ENCODE measurements at regions of chr1 and their contacts with region 1.

Region 1: DNA sequence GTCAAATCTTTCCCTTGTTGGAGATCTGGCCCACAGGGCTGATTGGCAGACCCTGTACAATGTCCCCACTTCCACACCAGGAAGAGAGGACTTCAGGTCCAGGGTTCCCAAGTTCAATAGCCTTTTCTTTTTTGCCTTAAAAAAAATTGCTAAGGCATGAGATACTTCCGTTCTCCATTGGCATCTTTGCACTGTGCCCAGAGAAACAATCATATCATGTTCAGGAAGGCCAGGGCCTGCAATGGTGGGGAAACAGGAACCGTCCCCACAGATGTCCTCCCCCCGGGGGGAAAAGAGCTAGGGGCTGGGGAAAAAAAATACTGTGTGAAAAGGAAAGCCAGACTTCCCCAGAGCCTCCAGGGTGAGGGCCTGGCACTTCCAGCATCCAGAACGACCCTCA is 24.6 kb upstream of the GJA8 start:
- DNase-seq: no peak
- H3K4me3 ChIP-seq: no peak overlapping the region
- H3K27ac ChIP-seq: no peak overlapping the region
- H3K4me1 ChIP-seq: no peaks in the 10 kb centered on the region
- H3K27me3 ChIP-seq: no peaks in the 10 kb centered on the region
- CTCF ChIP-seq: no peak

Region 2: GRCh38 chr1:147821883-147822282 is 56.1 kb before region 1 on chr1:
- CTCF ChIA-PET with region 1: no interaction called
- dilution Hi-C with region 1: loop called (anchors 5 kb)
- in situ Hi-C with region 1: no loop called
- intact Hi-C with region 1: no loop called
- DNase-seq: no peak
- H3K4me3 ChIP-seq: no peak overlapping the region
- H3K27ac ChIP-seq: no peak overlapping the region
- H3K4me1 ChIP-seq: peaks cover 3% of the 10 kb centered on the region
- H3K27me3 ChIP-seq: no peaks in the 10 kb centered on the region
- CTCF ChIP-seq: no peak

Region 3: DNA sequence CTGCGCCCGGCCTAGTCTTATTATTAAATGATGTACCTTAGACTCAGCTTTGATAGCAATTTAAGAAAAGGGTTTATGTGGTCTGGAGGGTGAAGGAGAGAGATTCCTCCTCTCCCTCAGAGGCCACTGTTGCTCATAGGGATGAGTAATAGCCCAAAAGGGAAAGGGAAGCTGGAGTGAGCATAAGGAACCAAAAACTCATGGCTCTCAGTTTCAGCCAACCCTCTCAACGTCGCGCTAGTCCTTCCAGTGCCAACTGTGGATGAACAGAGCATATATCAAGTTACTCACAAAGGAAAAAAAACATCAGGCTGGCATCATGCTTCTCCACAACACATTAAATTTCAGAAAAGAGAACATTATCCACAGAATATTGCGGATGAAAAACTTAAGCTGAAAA is 41.9 kb after region 1 on chr1:
- CTCF ChIA-PET with region 1: no interaction called
- dilution Hi-C with region 1: no loop called
- in situ Hi-C with region 1: no loop called
- intact Hi-C with region 1: no loop called
- DNase-seq: peak; percentile 11
- H3K4me3 ChIP-seq: no peak overlapping the region
- H3K27ac ChIP-seq: no peak overlapping the region
- H3K4me1 ChIP-seq: no peaks in the 10 kb centered on the region
- H3K27me3 ChIP-seq: no peaks in the 10 kb centered on the region
- CTCF ChIP-seq: no peak

Measured in mammary epithelial cell (primary cell).